AG04449 (cell line): ENCODE measurements at regions of chr1 and their contacts with region 1.

Region 1: DNA sequence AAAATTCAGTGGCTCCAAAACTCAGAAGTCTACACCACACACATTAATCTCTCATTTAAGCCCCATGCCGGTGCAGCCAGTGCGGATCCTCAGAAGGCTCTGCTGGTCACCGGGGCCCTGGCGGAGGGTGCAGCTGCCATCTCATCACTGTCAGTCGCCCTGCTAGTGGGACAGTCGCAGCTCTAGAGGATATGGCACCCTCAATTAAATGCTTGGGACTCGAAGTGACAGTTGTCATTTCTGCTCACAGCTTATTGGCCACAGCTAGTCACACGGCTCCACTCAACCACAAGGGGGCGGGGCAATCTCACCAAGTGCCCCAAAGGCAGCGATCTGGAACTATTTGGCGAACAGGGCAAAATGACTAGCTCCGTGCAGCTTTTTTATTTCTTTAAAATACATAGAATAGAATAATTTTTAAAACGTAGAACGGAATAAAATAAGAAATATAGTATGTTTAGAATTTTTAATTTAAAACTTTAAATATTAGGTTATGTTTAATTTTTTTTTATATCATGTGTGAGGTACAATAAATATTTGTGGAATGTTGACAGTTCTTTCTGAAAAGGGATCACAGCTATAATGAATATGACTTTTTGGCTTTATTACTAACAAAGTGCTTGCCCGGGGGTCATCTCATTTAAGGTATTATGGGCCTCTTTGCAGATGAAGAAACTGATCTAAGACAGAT is 8.0 kb upstream of the MAN1C1 start:
- DNase-seq: no peak
- H3K4me3 ChIP-seq: no peak overlapping the region
- CTCF ChIP-seq: peak; percentile 65

Region 2: GRCh38 chr1:25572708-25573600 is 35.7 kb before region 1 on chr1:
- CTCF ChIA-PET with region 1: interaction called, 27 read pairs
- POLR2A ChIA-PET with region 1: no interaction called
- DNase-seq: no peak
- H3K4me3 ChIP-seq: no peak overlapping the region
- CTCF ChIP-seq: peak; percentile 85

Region 3: DNA sequence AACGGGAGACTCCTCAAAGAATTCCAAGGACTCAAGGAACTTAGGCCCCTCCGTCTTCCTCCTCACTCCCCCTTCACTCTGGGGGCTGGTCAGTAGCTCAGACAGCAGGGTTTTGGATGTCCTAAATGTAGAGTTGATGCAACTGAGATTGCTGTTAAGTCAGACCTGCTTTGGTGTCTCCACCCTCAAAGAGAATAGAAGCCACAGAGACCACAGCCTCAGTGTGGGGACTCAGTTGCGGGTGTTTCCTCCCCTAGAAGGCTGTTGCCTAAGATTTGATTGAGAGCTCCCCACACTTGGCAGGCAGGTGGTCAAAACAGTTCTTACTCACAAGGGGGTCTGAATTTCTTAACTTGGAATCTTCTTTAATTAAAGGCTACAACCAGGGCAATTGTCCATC is 15.5 kb after region 1 on chr1:
- CTCF ChIA-PET with region 1: interaction called, 15 read pairs
- POLR2A ChIA-PET with region 1: no interaction called
- DNase-seq: no peak
- H3K4me3 ChIP-seq: no peak overlapping the region
- CTCF ChIP-seq: no peak

Region 4: DNA sequence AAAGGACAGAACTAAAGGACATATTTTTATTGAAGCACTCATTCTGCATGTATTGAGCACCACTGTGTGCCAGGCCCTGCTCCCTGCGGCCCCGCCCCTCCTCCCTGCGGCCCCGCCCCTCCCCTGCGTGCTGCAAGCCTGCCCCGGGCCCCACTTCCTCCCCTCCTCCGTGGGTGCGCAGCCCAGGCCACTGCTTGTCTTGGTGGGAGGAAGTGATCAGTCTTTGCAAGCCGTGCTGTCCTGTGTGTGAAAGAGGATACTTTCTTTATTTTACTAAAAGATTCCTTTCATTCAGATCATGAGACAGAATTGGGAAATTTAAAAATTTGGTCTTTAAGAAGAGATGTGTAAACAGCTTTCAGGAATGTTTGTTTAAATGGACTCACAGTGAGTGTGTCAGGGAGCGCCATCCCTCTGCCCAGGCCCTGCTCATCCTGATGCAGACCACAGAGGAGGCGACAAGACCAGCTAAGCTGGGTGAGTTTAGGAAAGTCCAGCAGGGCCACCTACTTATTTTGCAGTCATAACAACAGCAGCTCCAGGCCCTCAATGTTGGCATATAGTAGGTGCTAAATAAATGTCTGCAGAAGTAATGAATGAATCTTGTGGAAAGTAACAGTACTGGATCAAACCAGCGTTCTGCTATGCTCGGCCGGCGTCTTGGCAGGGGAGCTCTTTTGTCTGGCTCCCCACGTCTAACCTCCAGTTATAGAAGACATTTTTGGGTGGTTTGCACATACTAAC is 103.1 kb after region 1 on chr1:
- CTCF ChIA-PET with region 1: interaction called, 10 read pairs
- POLR2A ChIA-PET with region 1: no interaction called
- DNase-seq: peak; percentile 63
- H3K4me3 ChIP-seq: no peak overlapping the region
- CTCF ChIP-seq: no peak

Region 5: DNA sequence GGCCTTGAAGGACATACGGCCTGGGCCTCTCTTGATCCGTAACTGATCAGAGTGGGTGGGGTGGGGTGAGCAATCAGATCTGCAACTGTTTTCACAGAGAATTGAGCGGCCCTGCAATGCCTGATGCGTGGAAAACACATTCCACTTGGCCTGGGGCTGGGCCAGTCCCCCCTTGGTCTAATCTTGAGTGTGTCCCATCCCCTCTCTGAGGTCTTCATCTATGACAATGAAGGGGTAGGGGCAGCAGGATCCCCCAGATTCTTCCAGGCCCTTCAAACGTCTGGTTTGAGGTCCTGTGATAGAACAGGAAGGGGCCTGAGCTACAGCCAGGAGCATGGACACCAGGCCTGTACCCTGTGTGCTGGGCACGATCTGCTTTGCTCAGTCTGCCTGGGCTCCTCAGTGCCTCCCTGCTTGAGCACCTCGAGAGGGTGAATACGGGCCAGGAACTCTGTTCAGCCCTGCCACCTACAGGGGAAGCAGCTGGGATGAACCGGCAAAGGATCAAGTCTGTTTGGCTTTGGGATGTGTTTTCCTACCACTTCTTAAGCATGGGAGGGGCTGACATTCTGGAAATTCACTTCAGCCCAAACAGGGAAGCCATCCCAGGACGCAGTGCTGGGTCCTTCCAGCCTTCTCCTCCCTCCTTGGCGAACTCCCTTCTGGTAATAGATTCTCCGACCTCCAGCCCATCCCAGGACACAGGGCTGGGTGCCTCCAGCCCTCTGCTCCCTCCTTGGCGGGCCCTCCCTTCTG is 135.4 kb after region 1 on chr1:
- CTCF ChIA-PET with region 1: interaction called, 21 read pairs
- POLR2A ChIA-PET with region 1: no interaction called
- DNase-seq: peak; percentile 12
- H3K4me3 ChIP-seq: no peak overlapping the region
- CTCF ChIP-seq: peak; percentile 78